ENCODE measurements at regions of chr3 and their contacts with region 1.

Region 1: GRCh38 chr3:184229394-184230080 is at the start of gene VWA5B2:
- DNase-seq: peak; percentile 69 to 77 (median 70)
- H3K4me3 ChIP-seq: peak within 1 kb of the TSS; percentile 23 to 51
- H3K4me3 Mint-ChIP-seq: peak within 1 kb of the TSS; percentile 53 to 76 (median 66)
- H3K27ac ChIP-seq: no peak within 1 kb of the TSS
- H3K27ac Mint-ChIP-seq: peak within 1 kb of the TSS in 1 of 7 donors; percentile 76
- H3K4me1 ChIP-seq: peaks cover 11% of the 10 kb centered on the region
- H3K4me1 Mint-ChIP-seq: peaks cover 5 to 17% (median 7%) of the 10 kb centered on the region in 4 donors
- H3K27me3 ChIP-seq: peaks cover 40% of the 10 kb centered on the region
- H3K27me3 Mint-ChIP-seq: peaks cover 44 to 46% of the 10 kb centered on the region in 2 donors
- total RNA-seq, gene VWA5B2: not detected

Region 2: GRCh38 chr3:183895296-183895695 is 334.2 kb before region 1 on chr3:
- CTCF ChIA-PET with region 1: interaction called, 16 read pairs
- POLR2A ChIA-PET with region 1: no interaction called
- intact Hi-C with region 1: no loop called
- DNase-seq: peak; percentile 48 to 60 (median 57)
- H3K4me3 ChIP-seq: no peak overlapping the region
- H3K4me3 Mint-ChIP-seq: no peak overlapping the region
- H3K27ac ChIP-seq: no peak overlapping the region
- H3K27ac Mint-ChIP-seq: no peak overlapping the region
- H3K4me1 ChIP-seq: no peaks in the 10 kb centered on the region
- H3K4me1 Mint-ChIP-seq: peaks cover 0 to 3% (median 1%) of the 10 kb centered on the region in 4 donors
- H3K27me3 ChIP-seq: no peaks in the 10 kb centered on the region
- H3K27me3 Mint-ChIP-seq: peaks cover 17 to 37% of the 10 kb centered on the region in 2 donors

Region 3: DNA sequence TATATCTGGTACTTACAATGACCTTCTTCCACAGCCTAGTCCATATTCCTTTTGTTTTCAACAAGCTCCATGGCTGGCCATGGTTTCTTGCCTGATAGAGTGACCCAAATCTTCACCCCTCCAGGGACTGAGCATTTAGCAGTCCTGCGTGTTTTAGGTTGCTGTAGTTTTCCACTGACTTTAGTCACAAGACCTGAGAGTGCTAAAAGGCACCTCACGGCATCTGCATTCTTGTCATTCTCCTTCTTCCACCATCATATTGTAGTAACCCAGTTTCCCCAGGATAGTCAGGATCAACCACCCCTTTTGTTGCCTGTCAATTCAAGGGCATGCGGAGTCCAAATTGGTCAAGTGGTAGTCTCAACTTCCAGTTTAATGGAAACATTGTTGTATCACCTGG is 155.9 kb before region 1 on chr3:
- CTCF ChIA-PET with region 1: no interaction called
- POLR2A ChIA-PET with region 1: no interaction called
- intact Hi-C with region 1: no loop called
- DNase-seq: no peak
- H3K4me3 ChIP-seq: no peak overlapping the region
- H3K4me3 Mint-ChIP-seq: no peak overlapping the region
- H3K27ac ChIP-seq: no peak overlapping the region
- H3K27ac Mint-ChIP-seq: no peak overlapping the region
- H3K4me1 ChIP-seq: no peaks in the 10 kb centered on the region
- H3K4me1 Mint-ChIP-seq: no peaks in the 10 kb centered on the region
- H3K27me3 ChIP-seq: no peaks in the 10 kb centered on the region
- H3K27me3 Mint-ChIP-seq: peaks cover 14 to 19% of the 10 kb centered on the region in 2 donors

Region 4: DNA sequence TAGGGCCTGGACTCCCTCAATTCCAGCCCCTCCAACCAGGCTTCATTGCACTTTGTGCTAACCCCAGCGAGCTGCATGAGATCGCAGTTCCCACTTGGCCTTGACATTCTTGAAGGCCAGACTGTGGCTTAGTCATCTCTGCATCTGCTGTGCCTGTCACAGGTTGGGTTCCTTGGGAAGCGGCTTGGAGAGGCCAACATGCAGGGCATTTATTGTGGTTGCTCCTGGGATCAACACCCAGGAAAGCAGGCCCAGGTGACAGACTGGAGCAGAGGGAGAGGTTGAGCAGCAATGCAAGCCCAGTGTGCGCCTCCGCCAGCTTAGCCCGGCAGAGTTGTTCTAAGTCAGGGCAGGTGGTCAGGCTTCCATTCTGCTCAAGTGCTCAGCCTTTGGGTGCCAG is 33.0 kb before region 1 on chr3:
- CTCF ChIA-PET with region 1: interaction called, 10 read pairs
- POLR2A ChIA-PET with region 1: no interaction called
- intact Hi-C with region 1: no loop called
- DNase-seq: no peak
- H3K4me3 ChIP-seq: no peak overlapping the region
- H3K4me3 Mint-ChIP-seq: no peak overlapping the region
- H3K27ac ChIP-seq: no peak overlapping the region
- H3K27ac Mint-ChIP-seq: no peak overlapping the region
- H3K4me1 ChIP-seq: no peaks in the 10 kb centered on the region
- H3K4me1 Mint-ChIP-seq: no peaks in the 10 kb centered on the region
- H3K27me3 ChIP-seq: no peaks in the 10 kb centered on the region
- H3K27me3 Mint-ChIP-seq: no peaks in the 10 kb centered on the region

Region 5: GRCh38 chr3:184218814-184219213 is 10.7 kb before region 1 on chr3:
- CTCF ChIA-PET with region 1: interaction called, 26 read pairs
- POLR2A ChIA-PET with region 1: no interaction called
- intact Hi-C with region 1: no loop called
- DNase-seq: no peak
- H3K4me3 ChIP-seq: no peak overlapping the region
- H3K4me3 Mint-ChIP-seq: peak overlapping the region in 1 of 8 donors; percentile 20
- H3K27ac ChIP-seq: no peak overlapping the region
- H3K27ac Mint-ChIP-seq: no peak overlapping the region
- H3K4me1 ChIP-seq: no peaks in the 10 kb centered on the region
- H3K4me1 Mint-ChIP-seq: no peaks in the 10 kb centered on the region
- H3K27me3 ChIP-seq: no peaks in the 10 kb centered on the region
- H3K27me3 Mint-ChIP-seq: peaks cover 8 to 9% of the 10 kb centered on the region in 2 donors

Region 6: DNA sequence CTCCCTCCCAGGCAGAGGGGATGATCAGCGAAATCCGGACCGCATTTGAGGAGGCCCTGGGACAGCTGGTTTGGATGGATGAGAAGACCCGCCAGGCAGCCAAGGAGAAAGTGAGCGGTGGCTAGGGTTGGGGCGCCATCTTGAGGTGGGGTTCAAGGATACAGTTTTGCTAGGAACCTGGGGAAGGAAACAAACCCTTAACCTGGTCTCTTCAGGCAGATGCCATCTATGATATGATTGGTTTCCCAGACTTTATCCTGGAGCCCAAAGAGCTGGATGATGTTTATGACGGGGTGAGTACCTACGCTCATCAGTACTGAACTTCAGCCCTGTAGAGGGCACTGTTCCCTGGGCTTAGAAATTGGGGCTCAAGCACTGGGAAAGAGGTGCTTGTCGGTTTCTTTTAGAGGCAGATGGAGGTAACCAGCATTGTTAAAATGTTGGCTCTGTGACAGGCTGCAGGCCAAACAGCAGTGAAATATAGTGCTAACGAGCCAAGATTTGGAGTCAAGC is 59.9 kb after region 1 on chr3:
- CTCF ChIA-PET with region 1: interaction called, 21 read pairs
- POLR2A ChIA-PET with region 1: no interaction called
- intact Hi-C with region 1: loop called (anchors 1 kb)
- DNase-seq: peak; percentile 40 to 57 (median 48)
- H3K4me3 ChIP-seq: no peak overlapping the region
- H3K4me3 Mint-ChIP-seq: no peak overlapping the region
- H3K27ac ChIP-seq: no peak overlapping the region
- H3K27ac Mint-ChIP-seq: peak overlapping the region in 1 of 7 donors; percentile 57
- H3K4me1 ChIP-seq: no peaks in the 10 kb centered on the region
- H3K4me1 Mint-ChIP-seq: peaks cover 0 to 2% (median 0%) of the 10 kb centered on the region in 4 donors
- H3K27me3 ChIP-seq: peaks cover 3% of the 10 kb centered on the region
- H3K27me3 Mint-ChIP-seq: peaks cover 5 to 16% of the 10 kb centered on the region in 2 donors